Heart right ventricle (tissue), 16 donors: ENCODE measurements at regions of chr2 and their contacts with region 1.

Region 1: DNA sequence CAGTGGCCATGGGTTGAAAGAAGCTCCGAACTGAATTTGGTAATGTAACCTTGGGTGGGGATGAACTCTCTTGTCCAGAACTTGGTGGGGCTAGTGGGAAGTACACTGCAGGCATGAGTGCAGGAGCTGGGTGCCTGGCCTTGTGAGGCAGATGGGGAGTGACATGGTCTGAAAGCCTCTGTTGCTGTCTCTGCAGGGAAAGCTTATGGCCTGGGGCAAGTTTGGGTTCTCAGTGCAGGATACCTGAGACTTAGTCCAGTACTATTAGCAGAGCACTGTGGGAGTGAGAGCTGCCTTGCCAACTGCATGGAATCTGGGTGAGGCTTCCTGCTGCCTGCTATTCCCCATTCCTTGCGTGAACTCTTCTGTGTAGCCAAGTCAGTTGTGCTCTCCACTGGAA is 1620.9 kb upstream of the NXPH2 start:
- DNase-seq: no peak
- ATAC-seq: no peak
- H3K4me3 ChIP-seq: no peak overlapping the region
- H3K27ac ChIP-seq: no peak overlapping the region
- H3K4me1 ChIP-seq: no peaks in the 10 kb centered on the region
- H3K27me3 ChIP-seq: no peaks in the 10 kb centered on the region
- CTCF ChIP-seq: no peak

Region 2: GRCh38 chr2:141439527-141439926 is 1038.5 kb after region 1 on chr2:
- intact Hi-C with region 1: loop called in 1 of 10 experiments (anchors 10 kb)
- DNase-seq: no peak
- ATAC-seq: no peak
- H3K4me3 ChIP-seq: no peak overlapping the region
- H3K27ac ChIP-seq: no peak overlapping the region
- H3K4me1 ChIP-seq: no peaks in the 10 kb centered on the region
- H3K27me3 ChIP-seq: no peaks in the 10 kb centered on the region
- CTCF ChIP-seq: no peak